Breast epithelium (tissue), 4 donors: ENCODE measurements at regions of chr16 and their contacts with region 1.

Region 1: GRCh38 chr16:79449900-79450299 is 150.6 kb downstream of the MAF start:
- DNase-seq: no peak
- H3K4me3 ChIP-seq: no peak overlapping the region
- H3K27ac ChIP-seq: no peak overlapping the region
- H3K4me1 ChIP-seq: no peaks in the 10 kb centered on the region
- H3K27me3 ChIP-seq: no peaks in the 10 kb centered on the region
- CTCF ChIP-seq: no peak
- POLR2A ChIP-seq: no peak

Region 2: GRCh38 chr16:78607486-78607885 is 842.4 kb before region 1 on chr16:
- intact Hi-C with region 1: loop called (anchors 5 kb)
- DNase-seq: no peak
- H3K4me3 ChIP-seq: no peak overlapping the region
- H3K27ac ChIP-seq: no peak overlapping the region
- H3K4me1 ChIP-seq: no peaks in the 10 kb centered on the region
- H3K27me3 ChIP-seq: no peaks in the 10 kb centered on the region
- CTCF ChIP-seq: no peak
- POLR2A ChIP-seq: no peak

Region 3: DNA sequence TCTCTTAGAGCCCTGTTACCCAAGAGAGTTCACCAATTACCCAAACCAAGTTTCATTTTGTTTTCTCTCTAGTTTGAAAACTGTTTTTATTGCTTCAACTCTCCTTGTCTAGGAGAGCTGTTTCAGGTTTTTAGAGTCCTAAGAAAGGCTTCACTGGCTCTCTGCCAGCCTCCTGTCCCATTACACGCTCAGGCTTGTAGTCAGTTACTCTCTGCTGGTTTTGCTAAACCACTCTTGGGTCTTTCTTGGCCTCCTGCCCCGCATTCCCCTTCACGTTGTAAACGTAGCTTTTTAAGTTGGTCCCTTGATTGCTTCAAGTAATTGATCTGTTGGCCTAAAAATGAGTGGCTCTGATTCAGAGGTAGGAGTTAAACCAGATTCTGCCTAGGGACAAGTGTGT is 378.5 kb before region 1 on chr16:
- intact Hi-C with region 1: no loop called
- DNase-seq: peak in 1 of 2 donors; percentile 76
- H3K4me3 ChIP-seq: no peak overlapping the region
- H3K27ac ChIP-seq: no peak overlapping the region
- H3K4me1 ChIP-seq: no peaks in the 10 kb centered on the region
- H3K27me3 ChIP-seq: no peaks in the 10 kb centered on the region
- CTCF ChIP-seq: no peak
- POLR2A ChIP-seq: no peak

Region 4: GRCh38 chr16:79415983-79416640 is 33.8 kb before region 1 on chr16:
- intact Hi-C with region 1: no loop called
- DNase-seq: no peak
- H3K4me3 ChIP-seq: no peak overlapping the region
- H3K27ac ChIP-seq: no peak overlapping the region
- H3K4me1 ChIP-seq: no peaks in the 10 kb centered on the region
- H3K27me3 ChIP-seq: no peaks in the 10 kb centered on the region
- CTCF ChIP-seq: no peak
- POLR2A ChIP-seq: no peak